Psoas muscle (tissue), 8 donors: ENCODE measurements at regions of chr7 and their contacts with region 1.

Region 1: GRCh38 chr7:137606061-137606674 is 240.6 kb downstream of the DGKI start:
- DNase-seq: no peak
- ATAC-seq: no peak
- H3K4me3 ChIP-seq: no peak overlapping the region
- H3K27ac ChIP-seq: no peak overlapping the region
- H3K4me1 ChIP-seq: no peaks in the 10 kb centered on the region
- H3K27me3 ChIP-seq: peaks cover 0 to 2% (median 0%) of the 10 kb centered on the region in 3 donors
- CTCF ChIP-seq: peak; percentile 51

Region 2: GRCh38 chr7:137829337-137829992 is 223.3 kb after region 1 on chr7:
- intact Hi-C with region 1: no loop called
- DNase-seq: no peak
- ATAC-seq: no peak
- H3K4me3 ChIP-seq: no peak overlapping the region
- H3K27ac ChIP-seq: no peak overlapping the region
- H3K4me1 ChIP-seq: no peaks in the 10 kb centered on the region
- H3K27me3 ChIP-seq: no peaks in the 10 kb centered on the region
- CTCF ChIP-seq: no peak

Region 3: GRCh38 chr7:138002096-138002827 is 396.1 kb after region 1 on chr7:
- intact Hi-C with region 1: loop called in 1 of 2 experiments (anchors 10 kb)
- DNase-seq: peak; percentile 99
- ATAC-seq: peak; percentile 95 to 97 (median 96)
- H3K4me3 ChIP-seq: peak overlapping the region; percentile 93
- H3K27ac ChIP-seq: peak overlapping the region; percentile 88
- H3K4me1 ChIP-seq: peaks cover 18% of the 10 kb centered on the region
- H3K27me3 ChIP-seq: no peaks in the 10 kb centered on the region
- CTCF ChIP-seq: peak; percentile 89

Region 4: GRCh38 chr7:138738551-138739335 is 1132.6 kb after region 1 on chr7:
- intact Hi-C with region 1: loop called in 1 of 2 experiments (anchors 2 kb)
- DNase-seq: peak; percentile 74 to 83
- ATAC-seq: peak; percentile 56 to 81 (median 69)
- H3K4me3 ChIP-seq: no peak overlapping the region
- H3K27ac ChIP-seq: no peak overlapping the region
- H3K4me1 ChIP-seq: no peaks in the 10 kb centered on the region
- H3K27me3 ChIP-seq: no peaks in the 10 kb centered on the region
- CTCF ChIP-seq: peak; percentile 87